ENCODE measurements at regions of chr17 and their contacts with region 1.

Region 1: DNA sequence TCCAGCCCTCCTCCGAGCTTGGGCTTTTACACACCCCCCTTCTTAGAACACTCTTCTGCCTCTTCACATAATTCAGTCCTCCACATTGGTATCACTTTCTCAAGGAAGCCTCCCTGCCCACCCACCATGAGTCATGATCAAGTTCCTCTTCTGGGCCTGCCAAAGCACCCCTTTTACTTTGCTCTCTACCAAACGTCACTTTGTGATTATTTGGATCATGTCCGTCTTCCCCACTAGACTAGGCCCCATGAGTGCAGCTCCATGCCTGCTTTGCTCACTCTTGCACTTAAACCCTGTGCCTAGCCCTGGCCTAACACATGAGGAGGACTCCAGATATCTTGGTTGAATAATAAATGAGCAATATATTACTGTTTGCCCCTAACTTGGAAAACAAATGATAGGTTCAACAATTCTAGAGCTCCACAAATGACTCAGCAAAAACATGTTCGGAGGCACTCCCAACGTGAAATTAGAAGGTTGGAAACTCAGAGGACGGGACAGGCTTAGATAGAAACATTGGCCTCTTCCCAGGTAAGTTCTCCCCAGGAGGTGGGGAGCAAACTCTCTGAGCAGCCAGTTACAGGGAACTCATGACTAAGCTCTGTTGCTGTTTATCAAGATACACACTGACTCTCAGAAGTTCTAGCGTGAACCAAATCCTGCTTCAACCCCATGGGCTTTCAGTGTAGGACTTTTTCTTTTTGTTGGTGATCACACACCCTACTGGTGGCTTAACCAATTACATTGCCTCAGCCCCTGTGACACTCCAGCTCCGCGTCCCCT is 28.3 kb downstream of the G6PC1 start:
- H3K4me3 Mint-ChIP-seq: peak overlapping the region; percentile 37
- H3K27ac Mint-ChIP-seq: peak overlapping the region; percentile 94
- H3K4me1 Mint-ChIP-seq: peaks cover 25% of the 10 kb centered on the region
- H3K27me3 Mint-ChIP-seq: peaks cover under 1% of the 10 kb centered on the region

Region 2: GRCh38 chr17:42720996-42721583 is 207.8 kb before region 1 on chr17:
- intact Hi-C with region 1: loop called (anchors 5 kb)
- H3K4me3 Mint-ChIP-seq: no peak overlapping the region
- H3K27ac Mint-ChIP-seq: no peak overlapping the region
- H3K4me1 Mint-ChIP-seq: no peaks in the 10 kb centered on the region
- H3K27me3 Mint-ChIP-seq: no peaks in the 10 kb centered on the region

Region 3: GRCh38 chr17:42819944-42820535 is 108.9 kb before region 1 on chr17:
- intact Hi-C with region 1: loop called (anchors 5 kb)
- H3K4me3 Mint-ChIP-seq: no peak overlapping the region
- H3K27ac Mint-ChIP-seq: peak overlapping the region; percentile 35
- H3K4me1 Mint-ChIP-seq: peaks cover 16% of the 10 kb centered on the region
- H3K27me3 Mint-ChIP-seq: no peaks in the 10 kb centered on the region

Region 4: GRCh38 chr17:42843358-42843934 is 85.5 kb before region 1 on chr17:
- intact Hi-C with region 1: loop called (anchors 2 kb)
- H3K4me3 Mint-ChIP-seq: no peak overlapping the region
- H3K27ac Mint-ChIP-seq: no peak overlapping the region
- H3K4me1 Mint-ChIP-seq: peaks cover 25% of the 10 kb centered on the region
- H3K27me3 Mint-ChIP-seq: no peaks in the 10 kb centered on the region